ENCODE measurements at regions of chr21 and their contacts with region 1.

Region 1: GRCh38 chr21:33360881-33361602 is 36.3 kb downstream of the IFNAR1 start:
- DNase-seq: peak; percentile 78
- ATAC-seq: peak; percentile 98
- H3K4me3 ChIP-seq: peak overlapping the region; percentile 29
- H3K27ac ChIP-seq: peak overlapping the region; percentile 51
- H3K4me1 ChIP-seq: peaks cover 24% of the 10 kb centered on the region
- H3K27me3 ChIP-seq: no peaks in the 10 kb centered on the region
- CTCF ChIP-seq: peak; percentile 94 to 96 (median 94)
- EP300 ChIP-seq: no peak
- POLR2A ChIP-seq: peak; percentile 53; the same call in 1 of the 2 replicates
- RAD21 ChIP-seq: peak; percentile 66

Region 2: GRCh38 chr21:33229784-33230544 is 131.1 kb before region 1 on chr21 and contains the start of gene IFNAR2:
- CTCF ChIA-PET with region 1: interaction called, 17 read pairs
- POLR2A ChIA-PET with region 1: no interaction called
- RAD21 ChIA-PET with region 1: interaction called, 6 read pairs
- SMC1A ChIA-PET with region 1: interaction called, 8 read pairs
- in situ Hi-C with region 1: no loop called
- intact Hi-C with region 1: no loop called
- DNase-seq: no peak
- ATAC-seq: peak; percentile 75
- H3K4me3 ChIP-seq: peak within 1 kb of the TSS; percentile 100
- H3K27ac ChIP-seq: peak within 1 kb of the TSS; percentile 96
- H3K4me1 ChIP-seq: peaks cover 13% of the 10 kb centered on the region
- H3K27me3 ChIP-seq: no peaks in the 10 kb centered on the region
- CTCF ChIP-seq: no peak
- EP300 ChIP-seq: no peak
- POLR2A ChIP-seq: peak; percentile 64; the same call in 1 of the 2 replicates
- RAD21 ChIP-seq: no peak
- polyA plus RNA-seq, gene IFNAR2: 8.5 to 23.3 TPM

Region 3: GRCh38 chr21:33308586-33309490 is 52.2 kb before region 1 on chr21:
- CTCF ChIA-PET with region 1: interaction called, 11 read pairs
- POLR2A ChIA-PET with region 1: no interaction called
- RAD21 ChIA-PET with region 1: interaction called, 3 read pairs
- SMC1A ChIA-PET with region 1: interaction called, 4 read pairs
- in situ Hi-C with region 1: no loop called
- intact Hi-C with region 1: no loop called
- DNase-seq: peak; percentile 98
- ATAC-seq: peak; percentile 96
- H3K4me3 ChIP-seq: peak overlapping the region; percentile 9; the same call in 1 of the 2 replicates
- H3K27ac ChIP-seq: peak overlapping the region; percentile 57
- H3K4me1 ChIP-seq: peaks cover 21% of the 10 kb centered on the region
- H3K27me3 ChIP-seq: no peaks in the 10 kb centered on the region
- CTCF ChIP-seq: peak in 2 of 3 experiments; percentile 5 to 33; a peak in 2 of 6 replicates
- EP300 ChIP-seq: peak; percentile 91; a peak in 3 of 4 replicates
- POLR2A ChIP-seq: no peak
- RAD21 ChIP-seq: 0 out of 2 replicates have a peak, but pooled peaks have one; percentile 17

Region 4: GRCh38 chr21:33339918-33340317 is 21.1 kb before region 1 on chr21:
- CTCF ChIA-PET with region 1: interaction called, 27 read pairs
- POLR2A ChIA-PET with region 1: no interaction called
- RAD21 ChIA-PET with region 1: interaction called, 10 read pairs
- SMC1A ChIA-PET with region 1: interaction called, 19 read pairs
- in situ Hi-C with region 1: no loop called
- intact Hi-C with region 1: no loop called
- DNase-seq: no peak
- ATAC-seq: peak; percentile 31; the same call in 2 of the 3 replicates
- H3K4me3 ChIP-seq: no peak overlapping the region
- H3K27ac ChIP-seq: peak overlapping the region; percentile 61
- H3K4me1 ChIP-seq: peaks cover 21% of the 10 kb centered on the region
- H3K27me3 ChIP-seq: no peaks in the 10 kb centered on the region
- CTCF ChIP-seq: no peak
- EP300 ChIP-seq: no peak
- POLR2A ChIP-seq: no peak
- RAD21 ChIP-seq: no peak

Region 5: DNA sequence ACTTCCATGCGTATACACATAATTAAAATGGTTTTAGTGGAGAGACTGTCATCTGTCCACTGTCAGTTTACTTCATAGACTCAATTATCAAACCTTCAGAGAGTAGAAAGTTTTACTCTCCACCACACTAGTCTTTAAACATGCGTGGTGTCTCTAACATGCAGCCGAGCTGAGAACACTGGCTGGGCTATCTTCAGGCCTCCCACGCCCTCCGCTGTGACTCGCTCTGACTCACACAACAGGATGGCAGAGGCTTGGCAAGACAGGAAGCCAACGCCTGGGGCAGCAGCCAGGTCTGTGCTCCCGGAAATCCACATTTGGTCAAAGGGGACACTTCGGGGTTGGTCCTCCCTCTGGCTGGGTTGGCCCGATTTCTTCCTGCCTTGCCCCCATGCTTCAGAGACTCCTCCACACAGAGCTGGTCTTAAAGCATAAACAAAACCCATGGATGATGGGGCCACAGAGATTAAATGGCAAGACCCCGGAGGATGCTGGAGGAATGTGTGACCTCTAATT is 19.5 kb after region 1 on chr21:
- CTCF ChIA-PET with region 1: interaction called, 75 read pairs
- POLR2A ChIA-PET with region 1: interaction called, 7 read pairs
- RAD21 ChIA-PET with region 1: interaction called, 18 read pairs
- SMC1A ChIA-PET with region 1: interaction called, 39 read pairs
- in situ Hi-C with region 1: no loop called
- intact Hi-C with region 1: no loop called
- DNase-seq: peak; percentile 95
- ATAC-seq: peak; percentile 70
- H3K4me3 ChIP-seq: no peak overlapping the region; the same call in 1 of the 2 replicates
- H3K27ac ChIP-seq: peak overlapping the region; percentile 95
- H3K4me1 ChIP-seq: peaks cover 54% of the 10 kb centered on the region
- H3K27me3 ChIP-seq: no peaks in the 10 kb centered on the region
- CTCF ChIP-seq: no peak
- EP300 ChIP-seq: peak; percentile 30 to 48; a peak in 2 of 4 replicates
- POLR2A ChIP-seq: peak; percentile 69; the same call in 1 of the 2 replicates
- RAD21 ChIP-seq: no peak

Region 6: GRCh38 chr21:33412832-33413519 is 51.9 kb after region 1 on chr21:
- CTCF ChIA-PET with region 1: interaction called, 31 read pairs
- POLR2A ChIA-PET with region 1: no interaction called
- RAD21 ChIA-PET with region 1: interaction called, 9 read pairs
- SMC1A ChIA-PET with region 1: interaction called, 18 read pairs
- in situ Hi-C with region 1: no loop called
- intact Hi-C with region 1: loop called (anchors 5 kb)
- DNase-seq: no peak
- ATAC-seq: peak; percentile 84
- H3K4me3 ChIP-seq: peak overlapping the region; percentile 10; the same call in 1 of the 2 replicates
- H3K27ac ChIP-seq: peak overlapping the region; percentile 22; the same call in 1 of the 2 replicates
- H3K4me1 ChIP-seq: peaks cover 22% of the 10 kb centered on the region
- H3K27me3 ChIP-seq: no peaks in the 10 kb centered on the region
- CTCF ChIP-seq: no peak
- EP300 ChIP-seq: no peak
- POLR2A ChIP-seq: peak; percentile 57
- RAD21 ChIP-seq: no peak

Region 7: GRCh38 chr21:33608559-33608958 is 247.5 kb after region 1 on chr21:
- CTCF ChIA-PET with region 1: interaction called, 14 read pairs
- POLR2A ChIA-PET with region 1: no interaction called
- RAD21 ChIA-PET with region 1: interaction called, 9 read pairs
- SMC1A ChIA-PET with region 1: interaction called, 8 read pairs
- in situ Hi-C with region 1: no loop called
- intact Hi-C with region 1: no loop called
- DNase-seq: no peak
- ATAC-seq: no peak
- H3K4me3 ChIP-seq: no peak overlapping the region
- H3K27ac ChIP-seq: no peak overlapping the region
- H3K4me1 ChIP-seq: no peaks in the 10 kb centered on the region
- H3K27me3 ChIP-seq: no peaks in the 10 kb centered on the region
- CTCF ChIP-seq: no peak
- EP300 ChIP-seq: no peak
- POLR2A ChIP-seq: no peak
- RAD21 ChIP-seq: no peak

Region 8: GRCh38 chr21:33751120-33751519 is 390.1 kb after region 1 on chr21:
- CTCF ChIA-PET with region 1: no interaction called
- POLR2A ChIA-PET with region 1: no interaction called
- RAD21 ChIA-PET with region 1: no interaction called
- SMC1A ChIA-PET with region 1: no interaction called
- in situ Hi-C with region 1: no loop called
- intact Hi-C with region 1: no loop called
- DNase-seq: no peak
- ATAC-seq: no peak
- H3K4me3 ChIP-seq: no peak overlapping the region
- H3K27ac ChIP-seq: no peak overlapping the region
- H3K4me1 ChIP-seq: no peaks in the 10 kb centered on the region
- H3K27me3 ChIP-seq: no peaks in the 10 kb centered on the region
- CTCF ChIP-seq: no peak
- EP300 ChIP-seq: no peak
- POLR2A ChIP-seq: no peak
- RAD21 ChIP-seq: no peak

Measured in GM12878 (cell line).